ENCODE measurements at regions of chr5 and their contacts with region 1.

Region 1: GRCh38 chr5:122156724-122157325 is 27.5 kb downstream of the ZNF474 start:
- DNase-seq: no peak
- H3K4me3 ChIP-seq: no peak overlapping the region
- H3K27ac ChIP-seq: no peak overlapping the region
- H3K27me3 ChIP-seq: no peaks in the 10 kb centered on the region
- CTCF ChIP-seq: peak; percentile 57

Region 2: GRCh38 chr5:121968910-121969607 is 187.8 kb before region 1 on chr5:
- CTCF ChIA-PET with region 1: interaction called, 50 read pairs
- POLR2A ChIA-PET with region 1: interaction called, 5 read pairs
- DNase-seq: peak; percentile 98
- H3K4me3 ChIP-seq: peak overlapping the region; percentile 36
- H3K27ac ChIP-seq: peak overlapping the region; percentile 86
- H3K27me3 ChIP-seq: no peaks in the 10 kb centered on the region
- CTCF ChIP-seq: no peak

Region 3: GRCh38 chr5:122101636-122102285 is 55.1 kb before region 1 on chr5:
- CTCF ChIA-PET with region 1: interaction called, 58 read pairs
- POLR2A ChIA-PET with region 1: interaction called, 3 read pairs
- DNase-seq: no peak
- H3K4me3 ChIP-seq: no peak overlapping the region
- H3K27ac ChIP-seq: no peak overlapping the region
- H3K27me3 ChIP-seq: no peaks in the 10 kb centered on the region
- CTCF ChIP-seq: peak; percentile 67

Region 4: GRCh38 chr5:122142480-122143164 is 14.2 kb before region 1 on chr5:
- CTCF ChIA-PET with region 1: interaction called, 33 read pairs
- POLR2A ChIA-PET with region 1: interaction called, 3 read pairs
- DNase-seq: no peak
- H3K4me3 ChIP-seq: no peak overlapping the region
- H3K27ac ChIP-seq: peak overlapping the region; percentile 22
- H3K27me3 ChIP-seq: no peaks in the 10 kb centered on the region
- CTCF ChIP-seq: no peak

Region 5: GRCh38 chr5:122175852-122176251 is 19.0 kb after region 1 on chr5:
- CTCF ChIA-PET with region 1: interaction called, 17 read pairs
- POLR2A ChIA-PET with region 1: no interaction called
- DNase-seq: no peak
- H3K4me3 ChIP-seq: no peak overlapping the region
- H3K27ac ChIP-seq: no peak overlapping the region
- H3K27me3 ChIP-seq: no peaks in the 10 kb centered on the region
- CTCF ChIP-seq: no peak

Region 6: GRCh38 chr5:122434205-122434970 is 277.6 kb after region 1 on chr5:
- CTCF ChIA-PET with region 1: no interaction called
- POLR2A ChIA-PET with region 1: no interaction called
- DNase-seq: no peak
- H3K4me3 ChIP-seq: no peak overlapping the region
- H3K27ac ChIP-seq: no peak overlapping the region
- H3K27me3 ChIP-seq: no peaks in the 10 kb centered on the region
- CTCF ChIP-seq: no peak